ENCODE measurements at regions of chr17 and their contacts with region 1.

Region 1: GRCh38 chr17:65027305-65027704 is 29.2 kb downstream of the GNA13 start:
- DNase-seq: no peak
- ATAC-seq: peak; percentile 56
- H3K4me3 Mint-ChIP-seq: peak overlapping the region; percentile 38
- H3K27ac Mint-ChIP-seq: peak overlapping the region; percentile 89
- H3K4me1 Mint-ChIP-seq: peaks cover 90% of the 10 kb centered on the region
- H3K27me3 Mint-ChIP-seq: no peaks in the 10 kb centered on the region
- CTCF ChIP-seq: no peak

Region 2: DNA sequence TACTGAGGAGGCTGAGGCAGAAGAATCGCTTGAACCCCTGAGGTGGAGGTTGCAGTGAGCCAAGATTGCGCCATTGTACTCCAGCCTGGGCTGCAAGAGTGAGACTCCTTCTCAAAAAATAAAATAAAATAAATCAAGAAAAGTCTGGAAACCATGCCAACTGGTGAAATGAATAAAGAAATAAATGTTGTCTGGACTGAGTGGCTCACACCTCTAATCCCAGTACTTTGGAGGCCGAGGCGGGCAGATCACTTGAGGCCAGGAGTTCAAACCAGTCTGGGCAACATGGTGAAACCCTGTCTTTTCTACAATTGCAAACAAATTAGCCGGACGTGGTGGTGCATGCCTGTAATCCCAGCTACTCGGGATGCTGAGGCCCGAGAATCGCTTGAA is 107.3 kb before region 1 on chr17:
- CTCF ChIA-PET with region 1: no interaction called
- POLR2A ChIA-PET with region 1: no interaction called
- intact Hi-C with region 1: loop called (anchors 5 kb)
- DNase-seq: no peak
- ATAC-seq: no peak
- H3K4me3 Mint-ChIP-seq: peak overlapping the region; percentile 87
- H3K27ac Mint-ChIP-seq: peak overlapping the region; percentile 92
- H3K4me1 Mint-ChIP-seq: peaks cover 47% of the 10 kb centered on the region
- H3K27me3 Mint-ChIP-seq: no peaks in the 10 kb centered on the region
- CTCF ChIP-seq: no peak

Region 3: DNA sequence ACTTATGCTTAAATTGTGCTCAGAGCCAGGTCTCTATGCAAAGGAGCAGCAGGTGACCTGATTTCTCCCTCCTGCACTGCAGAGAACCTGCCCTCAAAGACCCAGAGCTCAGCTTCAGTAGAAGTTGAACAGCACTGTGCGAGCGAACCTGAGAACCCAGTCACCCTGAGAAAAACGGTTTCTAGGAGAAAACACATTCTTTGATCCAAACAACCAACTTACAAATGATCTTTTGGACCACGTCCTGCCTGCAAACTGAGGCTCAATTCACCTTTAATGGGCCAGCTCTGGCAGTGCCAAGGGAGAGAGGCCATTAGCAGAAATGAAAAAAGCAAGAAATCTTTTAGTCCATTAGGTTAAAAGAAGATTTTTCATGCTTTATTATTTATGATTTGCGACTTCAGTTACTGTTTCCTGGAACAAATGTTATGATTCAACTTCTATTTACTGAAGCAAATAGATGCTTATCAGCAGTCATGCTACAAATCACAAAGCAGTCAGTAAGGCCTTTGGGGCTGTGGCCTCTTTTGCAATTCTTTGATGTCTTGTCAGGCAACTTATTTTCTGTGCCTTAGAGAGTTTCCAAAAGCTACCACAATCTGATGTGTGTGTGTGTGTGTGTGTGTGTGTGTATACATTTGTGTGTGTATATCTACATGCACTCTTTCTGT is 42.3 kb before region 1 on chr17:
- CTCF ChIA-PET with region 1: no interaction called
- POLR2A ChIA-PET with region 1: interaction called, 11 read pairs
- intact Hi-C with region 1: loop called (anchors 1 kb)
- DNase-seq: no peak
- ATAC-seq: no peak
- H3K4me3 Mint-ChIP-seq: peak overlapping the region; percentile 81
- H3K27ac Mint-ChIP-seq: peak overlapping the region; percentile 99
- H3K4me1 Mint-ChIP-seq: peaks cover 64% of the 10 kb centered on the region
- H3K27me3 Mint-ChIP-seq: no peaks in the 10 kb centered on the region
- CTCF ChIP-seq: no peak

Region 4: DNA sequence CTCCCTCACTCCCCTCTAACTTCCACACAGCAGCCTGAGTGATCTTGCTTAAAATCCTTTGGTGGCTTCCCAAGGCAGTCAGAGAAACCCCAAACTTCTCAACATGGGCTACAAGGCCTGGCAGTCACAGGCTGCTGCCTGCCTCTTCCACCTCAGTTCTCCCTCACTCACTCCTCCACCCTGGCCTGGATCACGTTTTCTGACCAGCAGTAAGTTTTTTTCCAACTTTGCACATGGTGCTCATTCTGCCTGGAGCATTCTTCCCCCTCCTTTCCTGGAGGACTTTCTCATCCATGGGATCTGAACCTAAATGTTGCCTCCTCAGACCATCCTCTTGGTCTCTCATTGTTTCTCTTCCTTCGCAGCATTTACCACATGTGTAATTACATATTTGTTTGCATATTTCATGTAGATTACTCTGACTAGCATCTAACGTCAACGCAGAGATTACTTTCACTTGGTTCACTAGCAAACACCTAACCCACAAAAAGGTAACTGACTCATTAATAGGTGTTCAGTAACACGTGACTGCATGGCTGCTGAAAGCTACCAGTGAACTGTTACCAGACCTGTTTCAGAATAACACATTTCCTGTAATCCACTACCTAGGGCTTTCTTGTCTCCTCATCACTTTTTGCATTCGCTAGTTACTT is 12.2 kb after region 1 on chr17:
- CTCF ChIA-PET with region 1: no interaction called
- POLR2A ChIA-PET with region 1: interaction called, 6 read pairs
- intact Hi-C with region 1: loop called (anchors 1 kb)
- DNase-seq: no peak
- ATAC-seq: peak; percentile 73
- H3K4me3 Mint-ChIP-seq: peak overlapping the region; percentile 53
- H3K27ac Mint-ChIP-seq: peak overlapping the region; percentile 85
- H3K4me1 Mint-ChIP-seq: peaks cover 92% of the 10 kb centered on the region
- H3K27me3 Mint-ChIP-seq: no peaks in the 10 kb centered on the region
- CTCF ChIP-seq: no peak

Region 5: GRCh38 chr17:65055348-65056261 is 28.3 kb after region 1 on chr17:
- CTCF ChIA-PET with region 1: no interaction called
- POLR2A ChIA-PET with region 1: interaction called, 13 read pairs
- intact Hi-C with region 1: loop called (anchors 1 kb)
- DNase-seq: peak; percentile 55
- ATAC-seq: peak; percentile 21
- H3K4me3 Mint-ChIP-seq: peak overlapping the region; percentile 96
- H3K27ac Mint-ChIP-seq: peak overlapping the region; percentile 90
- H3K4me1 Mint-ChIP-seq: peaks cover 55% of the 10 kb centered on the region
- H3K27me3 Mint-ChIP-seq: no peaks in the 10 kb centered on the region
- CTCF ChIP-seq: no peak

Region 6: GRCh38 chr17:65122836-65123756 is 95.8 kb after region 1 on chr17:
- CTCF ChIA-PET with region 1: no interaction called
- POLR2A ChIA-PET with region 1: no interaction called
- intact Hi-C with region 1: loop called (anchors 1 kb)
- DNase-seq: peak; percentile 64
- ATAC-seq: peak; percentile 85
- H3K4me3 Mint-ChIP-seq: peak overlapping the region; percentile 87
- H3K27ac Mint-ChIP-seq: peak overlapping the region; percentile 96
- H3K4me1 Mint-ChIP-seq: peaks cover 18% of the 10 kb centered on the region
- H3K27me3 Mint-ChIP-seq: peaks cover 5% of the 10 kb centered on the region
- CTCF ChIP-seq: no peak

Region 7: DNA sequence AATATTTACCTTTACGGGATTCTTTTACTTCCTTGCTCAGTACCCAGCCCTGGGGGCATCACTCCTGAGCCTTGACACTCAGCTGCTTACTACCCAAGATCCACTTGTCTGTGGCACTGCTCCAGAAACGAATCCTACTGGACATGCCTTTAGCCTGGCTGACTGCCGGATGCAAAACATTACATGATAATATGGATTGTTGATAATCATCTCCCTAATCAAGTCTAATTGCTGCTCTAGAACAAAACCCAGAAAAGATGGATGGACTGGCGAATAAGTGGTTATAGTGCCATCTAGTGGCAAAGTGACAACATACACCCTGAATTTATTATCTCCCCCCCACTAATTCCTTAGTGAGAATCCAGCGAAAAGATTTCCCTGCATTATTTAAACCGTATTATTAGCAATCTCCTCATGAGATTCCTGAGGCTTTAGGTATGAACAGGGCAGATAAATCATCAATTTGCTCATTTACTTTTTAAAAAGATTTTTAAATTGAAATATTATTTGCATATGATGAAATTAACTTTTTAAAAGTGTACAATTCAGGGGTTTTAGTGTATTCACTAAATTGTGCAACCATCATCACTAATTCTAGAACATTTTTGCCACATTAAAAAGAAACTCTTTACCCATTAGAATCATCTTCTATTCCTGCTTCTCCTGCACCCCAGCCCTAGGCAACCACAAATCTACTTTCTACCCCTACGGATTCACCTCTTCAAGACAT is 171.5 kb after region 1 on chr17:
- CTCF ChIA-PET with region 1: no interaction called
- POLR2A ChIA-PET with region 1: no interaction called
- intact Hi-C with region 1: loop called (anchors 1 kb)
- DNase-seq: no peak
- ATAC-seq: peak; percentile 67
- H3K4me3 Mint-ChIP-seq: no peak overlapping the region
- H3K27ac Mint-ChIP-seq: peak overlapping the region; percentile 8
- H3K4me1 Mint-ChIP-seq: no peaks in the 10 kb centered on the region
- H3K27me3 Mint-ChIP-seq: peaks cover 2% of the 10 kb centered on the region
- CTCF ChIP-seq: peak; percentile 78